ENCODE measurements at regions of chr17 and their contacts with region 1.

Region 1: GRCh38 chr17:39668199-39668966 is at the start of gene PNMT:
- DNase-seq: peak; percentile 79
- H3K4me3 Mint-ChIP-seq: peak within 1 kb of the TSS; percentile 46
- H3K27ac Mint-ChIP-seq: no peak within 1 kb of the TSS
- H3K4me1 Mint-ChIP-seq: peaks cover 14% of the 10 kb centered on the region
- H3K27me3 Mint-ChIP-seq: peaks cover 86% of the 10 kb centered on the region

Region 2: DNA sequence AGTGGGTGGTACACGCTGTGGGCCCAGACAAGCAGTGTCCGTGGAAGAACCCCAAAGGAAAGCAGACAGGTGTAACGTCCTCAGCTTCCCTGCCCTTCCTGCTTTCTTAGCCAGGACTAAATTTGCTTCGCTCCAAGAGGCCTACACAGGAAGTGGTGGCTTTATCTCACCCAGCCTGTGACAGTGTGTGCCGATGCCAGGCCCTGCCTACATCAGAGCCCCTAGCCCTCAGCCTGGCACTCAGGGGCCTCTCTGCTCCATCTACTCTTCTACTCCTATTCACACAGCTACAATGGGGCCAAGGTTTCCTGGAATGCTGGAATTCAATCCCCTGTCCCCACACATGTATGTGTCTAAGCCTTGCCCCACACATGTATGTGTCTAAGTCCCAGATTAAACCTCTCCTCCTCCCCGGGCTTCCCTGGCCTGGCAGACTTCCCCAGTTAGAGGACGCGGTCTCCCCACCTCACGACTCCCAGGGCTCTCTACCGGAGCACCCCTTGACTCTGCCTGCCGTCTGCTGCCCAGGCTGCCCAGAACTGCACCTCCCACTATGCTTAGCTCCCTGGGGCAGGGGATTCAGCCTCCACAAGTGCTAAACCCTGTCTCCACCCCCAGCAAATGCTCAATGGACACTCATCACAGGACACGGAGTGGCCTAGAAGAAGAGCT is 11.3 kb after region 1 on chr17:
- CTCF ChIA-PET with region 1: interaction called, 14 read pairs
- DNase-seq: peak; percentile 63
- H3K4me3 Mint-ChIP-seq: no peak overlapping the region
- H3K27ac Mint-ChIP-seq: peak overlapping the region; percentile 88
- H3K4me1 Mint-ChIP-seq: peaks cover 60% of the 10 kb centered on the region
- H3K27me3 Mint-ChIP-seq: no peaks in the 10 kb centered on the region

Measured in activated naive CD4-positive, alpha-beta T cell treated with anti-CD3 and anti-CD28 coated beads, Interleukin-2, amount 10 ng/mL, durations not matched to agents 7 days and 5 days (primary cell).